GM10248 (cell line): ENCODE measurements at regions of chr7 and their contacts with region 1.

Region 1: GRCh38 chr7:123748734-123749536 is at the start of gene WASL:
- DNase-seq: peak; percentile 90
- CTCF ChIP-seq: no peak

Region 2: DNA sequence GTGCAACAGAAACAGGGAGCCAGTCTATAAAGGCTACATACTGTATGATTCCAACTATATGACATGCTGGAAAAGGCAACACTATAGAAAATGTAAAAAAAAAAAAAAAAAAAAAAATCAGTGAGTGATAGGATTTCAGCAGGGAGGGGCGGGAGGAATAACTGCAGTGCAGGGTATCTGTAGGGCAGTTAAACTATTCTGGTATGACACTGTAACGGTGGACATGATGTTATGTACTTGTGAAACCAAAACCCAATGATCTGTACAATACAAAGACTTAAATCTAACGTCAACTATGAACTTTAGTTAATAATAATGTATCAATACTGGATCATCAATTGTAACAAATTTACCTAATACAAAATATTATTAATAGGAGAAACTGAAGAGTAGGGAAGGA is 14.4 kb before region 1 on chr7:
- CTCF ChIA-PET with region 1: interaction called, 16 read pairs
- POLR2A ChIA-PET with region 1: no interaction called
- DNase-seq: no peak
- CTCF ChIP-seq: no peak

Region 3: DNA sequence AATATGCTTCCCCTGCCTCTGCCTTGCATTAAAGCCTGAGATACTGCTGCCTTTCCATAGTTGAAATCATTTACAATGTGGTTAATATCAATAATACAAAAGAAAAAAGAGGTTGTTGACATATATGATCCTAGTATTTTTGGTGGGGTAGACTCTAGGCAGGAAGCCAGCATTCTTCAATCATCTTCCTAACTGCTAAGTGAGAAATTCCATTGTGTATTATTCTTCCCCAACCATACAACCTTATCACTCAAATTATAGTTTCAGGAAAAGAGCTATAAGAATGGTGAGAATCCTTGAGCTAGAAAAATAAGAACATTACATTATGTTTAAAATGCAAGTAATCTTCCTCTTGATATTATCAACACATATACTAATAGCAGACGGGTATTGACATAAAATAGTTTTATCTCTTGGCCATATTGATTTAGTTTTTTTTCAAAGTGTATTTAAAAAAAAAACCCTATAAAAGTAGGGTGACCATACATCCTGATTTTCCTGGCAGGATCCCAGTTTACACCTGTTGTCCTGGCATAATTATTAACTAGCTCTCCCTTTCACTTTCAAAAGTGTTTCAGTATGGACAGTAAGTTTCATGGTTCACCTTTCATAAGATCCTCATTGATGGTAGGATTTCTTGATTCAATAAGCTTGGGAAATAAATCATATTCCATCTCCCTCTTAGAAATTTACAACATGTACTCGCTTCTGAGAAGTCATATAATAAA is 33.3 kb after region 1 on chr7:
- CTCF ChIA-PET with region 1: no interaction called
- POLR2A ChIA-PET with region 1: no interaction called
- DNase-seq: no peak
- CTCF ChIP-seq: no peak

Region 4: DNA sequence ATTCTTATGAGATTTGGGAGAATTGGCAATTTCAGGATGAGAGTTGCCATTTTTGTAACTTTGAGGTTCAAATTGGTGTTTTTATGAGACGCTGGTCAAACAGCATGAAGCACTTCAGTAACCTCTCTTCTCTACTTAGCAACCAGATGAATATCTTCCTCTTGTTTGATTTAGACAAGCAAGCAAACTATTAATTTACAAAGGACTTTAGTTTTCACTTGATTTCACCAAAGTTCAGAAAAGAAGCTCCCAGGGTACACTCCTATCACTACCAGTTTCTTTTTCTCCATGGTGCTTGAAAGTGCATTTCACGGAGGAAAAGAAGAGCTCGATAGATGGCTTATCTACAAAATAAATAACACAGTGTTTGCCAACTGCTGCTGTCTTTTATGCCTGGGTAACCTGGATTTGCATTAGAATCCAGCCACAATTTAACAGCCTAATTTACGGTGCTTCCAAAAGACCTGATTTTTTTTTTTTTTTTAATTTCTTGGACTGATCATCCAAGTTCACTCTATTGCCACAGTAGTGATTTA is 740.9 kb after region 1 on chr7:
- CTCF ChIA-PET with region 1: no interaction called
- POLR2A ChIA-PET with region 1: no interaction called
- DNase-seq: no peak
- CTCF ChIP-seq: no peak